ENCODE measurements at regions of chr16 and their contacts with region 1.

Region 1: GRCh38 chr16:57244767-57245471 is at the start of gene ARL2BP:
- DNase-seq: peak; percentile 93 to 98 (median 97)
- ATAC-seq: peak; percentile 94
- H3K4me3 ChIP-seq: peak within 1 kb of the TSS; percentile 64
- H3K4me3 Mint-ChIP-seq: peak within 1 kb of the TSS; percentile 89
- H3K27ac ChIP-seq: peak within 1 kb of the TSS; percentile 63 to 68
- H3K27ac Mint-ChIP-seq: peak within 1 kb of the TSS; percentile 86
- H3K4me1 ChIP-seq: peaks cover 19% of the 10 kb centered on the region
- H3K4me1 Mint-ChIP-seq: peaks cover 21% of the 10 kb centered on the region
- H3K27me3 ChIP-seq: no peaks in the 10 kb centered on the region
- H3K27me3 Mint-ChIP-seq: no peaks in the 10 kb centered on the region
- CTCF ChIP-seq: peak; percentile 53
- total RNA-seq, gene ARL2BP: 32.4 to 35.6 TPM

Region 2: DNA sequence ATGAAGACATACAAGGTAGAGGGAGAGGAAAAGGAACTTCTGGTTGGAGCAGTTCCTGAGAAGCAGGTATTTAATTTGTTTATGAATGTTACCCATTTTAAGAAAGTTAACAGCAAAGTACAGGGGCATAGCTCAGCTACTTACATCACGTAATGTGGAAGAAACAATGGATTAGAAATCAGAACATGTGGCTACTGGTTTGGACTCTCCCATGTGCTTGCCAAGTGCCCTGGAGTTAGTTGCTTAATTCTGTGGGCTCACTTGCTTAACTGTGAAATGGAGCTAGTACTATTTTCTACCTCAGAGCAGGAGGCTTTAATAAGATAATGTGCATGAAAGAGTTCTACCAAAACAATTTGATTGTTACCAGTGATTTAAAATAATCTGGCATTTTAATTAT is 31.5 kb before region 1 on chr16:
- CTCF ChIA-PET with region 1: no interaction called
- POLR2A ChIA-PET with region 1: no interaction called
- intact Hi-C with region 1: no loop called
- DNase-seq: no peak
- ATAC-seq: no peak
- H3K4me3 ChIP-seq: no peak overlapping the region
- H3K4me3 Mint-ChIP-seq: no peak overlapping the region
- H3K27ac ChIP-seq: no peak overlapping the region
- H3K27ac Mint-ChIP-seq: no peak overlapping the region
- H3K4me1 ChIP-seq: no peaks in the 10 kb centered on the region
- H3K4me1 Mint-ChIP-seq: no peaks in the 10 kb centered on the region
- H3K27me3 ChIP-seq: no peaks in the 10 kb centered on the region
- H3K27me3 Mint-ChIP-seq: no peaks in the 10 kb centered on the region
- CTCF ChIP-seq: no peak

Region 3: GRCh38 chr16:57265850-57266530 is 21.1 kb after region 1 on chr16:
- CTCF ChIA-PET with region 1: interaction called, 5 read pairs
- POLR2A ChIA-PET with region 1: interaction called, 4 read pairs
- intact Hi-C with region 1: loop called (anchors 1 to 2 kb)
- DNase-seq: no peak
- ATAC-seq: no peak
- H3K4me3 ChIP-seq: no peak overlapping the region
- H3K4me3 Mint-ChIP-seq: peak overlapping the region; percentile 43
- H3K27ac ChIP-seq: peak overlapping the region in 1 of 2 donors; percentile 57
- H3K27ac Mint-ChIP-seq: peak overlapping the region; percentile 97
- H3K4me1 ChIP-seq: peaks cover 55% of the 10 kb centered on the region
- H3K4me1 Mint-ChIP-seq: peaks cover 53% of the 10 kb centered on the region
- H3K27me3 ChIP-seq: no peaks in the 10 kb centered on the region
- H3K27me3 Mint-ChIP-seq: no peaks in the 10 kb centered on the region
- CTCF ChIP-seq: no peak

Region 4: DNA sequence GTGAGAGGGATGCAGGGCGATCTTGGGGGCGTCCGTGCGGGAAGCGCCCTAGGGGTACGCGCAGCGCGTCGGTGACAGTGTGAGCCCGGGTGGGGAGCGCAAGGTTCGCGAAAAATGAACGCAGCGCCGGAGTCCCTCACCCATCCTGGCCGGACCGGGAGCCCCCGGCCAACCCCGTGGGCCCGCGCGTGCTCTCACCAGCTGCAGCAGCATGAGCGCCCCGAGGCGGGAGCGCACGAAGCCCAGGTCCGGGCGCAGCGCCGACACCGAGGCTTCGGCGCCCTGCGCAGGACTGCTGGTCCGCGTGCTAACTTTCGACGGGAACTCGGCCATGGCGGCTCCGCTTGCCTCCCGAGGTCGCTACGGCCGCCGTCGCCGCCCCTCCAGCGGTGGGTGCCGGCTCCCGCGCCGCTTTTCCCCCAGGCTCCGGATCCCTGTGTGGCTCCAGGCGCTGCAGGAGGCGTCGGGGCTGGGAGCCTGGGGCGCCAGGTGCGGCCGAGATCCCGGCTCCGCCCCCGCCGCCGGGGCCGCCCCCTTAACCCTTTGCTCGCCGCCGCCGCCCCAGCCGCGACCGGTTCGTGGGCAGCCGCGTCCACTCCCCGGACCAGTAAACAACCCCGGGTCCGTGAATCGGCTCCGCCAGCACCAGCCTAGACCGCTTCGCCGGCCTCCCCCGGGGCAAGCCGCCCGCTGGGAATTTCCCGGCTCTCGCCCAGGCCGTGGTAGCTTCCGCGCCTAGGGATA is 39.5 kb after region 1 on chr16 and contains the start of gene PLLP:
- CTCF ChIA-PET with region 1: no interaction called
- POLR2A ChIA-PET with region 1: interaction called, 6 read pairs
- intact Hi-C with region 1: loop called (anchors 2 to 5 kb)
- DNase-seq: peak in 11 of 14 experiments; percentile 17 to 72 (median 43)
- ATAC-seq: peak; percentile 73
- H3K4me3 ChIP-seq: peak within 1 kb of the TSS; percentile 64
- H3K4me3 Mint-ChIP-seq: peak within 1 kb of the TSS; percentile 89
- H3K27ac ChIP-seq: no peak within 1 kb of the TSS
- H3K27ac Mint-ChIP-seq: peak within 1 kb of the TSS; percentile 49
- H3K4me1 ChIP-seq: peaks cover 37% of the 10 kb centered on the region
- H3K4me1 Mint-ChIP-seq: peaks cover 38% of the 10 kb centered on the region
- H3K27me3 ChIP-seq: peaks cover 4 to 5% of the 10 kb centered on the region in 2 experiments
- H3K27me3 Mint-ChIP-seq: peaks cover 4% of the 10 kb centered on the region
- CTCF ChIP-seq: no peak
- total RNA-seq, gene PLLP: 1.8 to 2.5 TPM

Region 5: GRCh38 chr16:57413301-57413730 is 168.4 kb after region 1 on chr16:
- CTCF ChIA-PET with region 1: interaction called, 6 read pairs
- POLR2A ChIA-PET with region 1: no interaction called
- intact Hi-C with region 1: loop called (anchors 2 to 5 kb)
- DNase-seq: no peak
- ATAC-seq: no peak
- H3K4me3 ChIP-seq: no peak overlapping the region
- H3K4me3 Mint-ChIP-seq: no peak overlapping the region
- H3K27ac ChIP-seq: no peak overlapping the region
- H3K27ac Mint-ChIP-seq: no peak overlapping the region
- H3K4me1 ChIP-seq: peaks cover 16% of the 10 kb centered on the region
- H3K4me1 Mint-ChIP-seq: peaks cover 7% of the 10 kb centered on the region
- H3K27me3 ChIP-seq: no peaks in the 10 kb centered on the region
- H3K27me3 Mint-ChIP-seq: no peaks in the 10 kb centered on the region
- CTCF ChIP-seq: no peak

Region 6: DNA sequence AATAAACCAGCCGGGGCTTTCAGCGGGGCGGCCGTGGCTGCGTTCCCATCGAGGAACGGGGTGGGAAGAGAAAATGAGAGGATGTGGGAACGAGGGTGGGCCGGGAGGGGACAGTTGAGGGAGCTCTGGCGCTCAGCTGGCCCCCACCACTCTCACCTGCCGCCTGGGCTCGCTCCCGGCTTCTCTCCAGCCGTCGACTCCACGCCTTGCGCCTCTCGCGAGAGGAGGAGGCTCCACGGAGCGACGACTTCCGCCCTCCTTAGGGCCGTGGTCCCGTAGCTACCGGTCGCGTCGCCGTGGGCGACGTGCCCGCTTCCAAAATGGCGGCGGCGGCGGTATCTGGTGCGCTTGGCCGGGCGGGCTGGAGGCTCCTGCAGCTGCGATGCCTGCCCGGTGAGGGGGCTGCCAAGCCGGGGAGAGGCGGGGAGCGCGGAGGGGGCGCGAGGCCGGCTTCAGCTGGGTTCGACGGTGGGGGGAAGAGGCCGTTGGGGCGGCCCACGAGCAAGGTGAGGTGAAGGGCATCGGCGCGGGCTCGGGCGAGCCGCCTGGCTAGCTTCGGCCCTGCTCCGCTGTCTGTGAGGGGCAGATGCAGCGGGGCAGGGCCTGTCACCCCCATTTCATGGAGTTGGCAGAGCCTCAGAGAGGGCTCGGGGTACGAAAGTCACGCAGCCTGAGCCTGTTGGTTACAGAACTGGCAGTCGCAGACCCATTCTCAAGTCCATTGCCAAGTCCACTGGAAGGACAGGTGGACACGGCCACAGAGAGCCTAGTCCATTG is 202.5 kb after region 1 on chr16 and contains the starts of genes CIAPIN1 and COQ9:
- CTCF ChIA-PET with region 1: no interaction called
- POLR2A ChIA-PET with region 1: interaction called, 6 read pairs
- intact Hi-C with region 1: loop called in 1 of 2 experiments (anchors 10 kb)
- DNase-seq: peak; percentile 83 to 97 (median 92)
- ATAC-seq: peak; percentile 99
- H3K4me3 ChIP-seq: peak within 1 kb of the TSS; percentile 96
- H3K4me3 Mint-ChIP-seq: peak within 1 kb of the TSS; percentile 96
- H3K27ac ChIP-seq: peak within 1 kb of the TSS; percentile 73 to 79
- H3K27ac Mint-ChIP-seq: peak within 1 kb of the TSS; percentile 88
- H3K4me1 ChIP-seq: peaks cover 29% of the 10 kb centered on the region
- H3K4me1 Mint-ChIP-seq: peaks cover 34% of the 10 kb centered on the region
- H3K27me3 ChIP-seq: no peaks in the 10 kb centered on the region
- H3K27me3 Mint-ChIP-seq: no peaks in the 10 kb centered on the region
- CTCF ChIP-seq: no peak
- total RNA-seq, gene CIAPIN1: 27.8 to 28.0 TPM
- total RNA-seq, gene COQ9: 7.0 to 7.6 TPM